Heart right ventricle (tissue), 16 donors: ENCODE measurements at regions of chr11 and their contacts with region 1.

Region 1: GRCh38 chr11:63768237-63769043 is at the start of gene ZFTA:
- DNase-seq: peak; percentile 74 to 75
- ATAC-seq: peak; percentile 7 to 51 (median 26)
- H3K4me3 ChIP-seq: peak within 1 kb of the TSS; percentile 70 to 89 (median 84)
- H3K27ac ChIP-seq: peak within 1 kb of the TSS; percentile 60 to 94 (median 86)
- H3K4me1 ChIP-seq: peaks cover 7 to 40% (median 25%) of the 10 kb centered on the region in 9 donors
- H3K27me3 ChIP-seq: peaks cover 0 to 23% (median 0%) of the 10 kb centered on the region in 7 donors
- CTCF ChIP-seq: peak; percentile 26 to 96 (median 65)
- total RNA-seq, gene ZFTA: 6.8 to 14.3 (median 8.9) TPM

Region 2: DNA sequence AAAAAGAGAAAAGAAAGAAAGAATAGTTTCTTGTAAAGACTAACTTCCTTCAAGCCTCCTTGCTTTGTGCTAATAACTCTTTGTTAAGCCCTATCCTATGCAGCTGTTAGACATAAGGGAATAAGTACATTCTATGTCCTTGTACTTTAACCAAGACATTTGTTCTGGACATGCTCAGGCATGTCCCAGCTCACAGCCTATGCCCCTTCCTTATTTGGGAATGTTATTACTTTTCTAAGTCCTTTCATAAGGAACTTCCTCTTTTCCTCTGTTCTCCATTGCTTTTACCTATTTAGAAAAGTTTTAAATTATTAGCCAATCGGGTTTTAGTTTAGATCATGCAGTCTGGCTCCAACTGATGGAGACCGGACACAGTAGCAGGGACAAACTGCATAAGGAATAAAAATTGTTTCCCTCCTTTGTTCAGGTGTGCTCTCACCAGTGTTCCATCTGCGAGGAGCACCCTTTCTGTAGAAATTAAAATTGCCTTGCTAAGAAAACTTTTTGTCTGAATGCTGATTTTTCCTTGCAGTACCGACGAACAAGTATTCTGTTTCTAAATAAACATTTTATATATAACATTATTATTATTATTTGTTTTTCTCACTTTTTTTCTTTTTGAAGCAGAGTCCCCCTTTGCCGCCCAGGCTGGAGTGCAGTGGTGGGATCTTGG is 23.2 kb after region 1 on chr11:
- intact Hi-C with region 1: no loop called
- DNase-seq: no peak
- ATAC-seq: no peak
- H3K4me3 ChIP-seq: no peak overlapping the region
- H3K27ac ChIP-seq: no peak overlapping the region
- H3K4me1 ChIP-seq: no peaks in the 10 kb centered on the region
- H3K27me3 ChIP-seq: no peaks in the 10 kb centered on the region
- CTCF ChIP-seq: no peak

Region 3: DNA sequence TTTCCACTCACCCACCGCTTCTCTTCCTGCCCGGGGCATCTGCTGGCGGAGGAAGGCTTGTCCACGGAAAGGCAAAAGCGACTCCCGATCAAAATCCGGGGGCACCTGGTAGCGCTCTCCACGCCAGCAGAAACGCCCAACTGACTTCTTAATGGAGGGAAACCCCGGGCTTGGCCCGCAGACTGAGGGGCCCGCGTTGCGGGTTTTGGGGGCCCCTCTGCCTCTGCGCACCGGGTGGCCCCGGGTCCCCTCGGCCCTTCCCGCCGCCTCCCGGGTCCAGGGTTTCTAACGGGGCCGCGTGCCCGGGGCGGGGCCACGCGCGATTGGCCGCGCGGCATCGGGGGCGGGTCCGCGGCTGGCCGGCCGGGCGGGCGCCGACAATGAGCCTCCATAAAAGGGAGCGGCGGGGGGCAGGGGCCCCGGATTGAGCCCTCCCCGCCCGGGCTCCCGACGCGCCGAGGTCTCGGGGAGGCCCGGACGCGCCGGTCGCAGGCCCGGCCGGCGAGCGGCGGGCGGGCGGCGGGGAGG is 44.7 kb after region 1 on chr11 and contains the start of gene SPINDOC:
- intact Hi-C with region 1: loop called in 6 of 10 experiments (anchors 2 to 10 kb)
- DNase-seq: peak; percentile 81 to 83
- ATAC-seq: peak; percentile 87 to 95 (median 93)
- H3K4me3 ChIP-seq: peak within 1 kb of the TSS; percentile 76 to 100 (median 96)
- H3K27ac ChIP-seq: peak within 1 kb of the TSS; percentile 35 to 93 (median 82)
- H3K4me1 ChIP-seq: peaks cover 0 to 38% (median 22%) of the 10 kb centered on the region in 9 donors
- H3K27me3 ChIP-seq: no peaks in the 10 kb centered on the region
- CTCF ChIP-seq: no peak
- total RNA-seq, gene SPINDOC: 7.0 to 13.2 (median 9.9) TPM

Region 4: DNA sequence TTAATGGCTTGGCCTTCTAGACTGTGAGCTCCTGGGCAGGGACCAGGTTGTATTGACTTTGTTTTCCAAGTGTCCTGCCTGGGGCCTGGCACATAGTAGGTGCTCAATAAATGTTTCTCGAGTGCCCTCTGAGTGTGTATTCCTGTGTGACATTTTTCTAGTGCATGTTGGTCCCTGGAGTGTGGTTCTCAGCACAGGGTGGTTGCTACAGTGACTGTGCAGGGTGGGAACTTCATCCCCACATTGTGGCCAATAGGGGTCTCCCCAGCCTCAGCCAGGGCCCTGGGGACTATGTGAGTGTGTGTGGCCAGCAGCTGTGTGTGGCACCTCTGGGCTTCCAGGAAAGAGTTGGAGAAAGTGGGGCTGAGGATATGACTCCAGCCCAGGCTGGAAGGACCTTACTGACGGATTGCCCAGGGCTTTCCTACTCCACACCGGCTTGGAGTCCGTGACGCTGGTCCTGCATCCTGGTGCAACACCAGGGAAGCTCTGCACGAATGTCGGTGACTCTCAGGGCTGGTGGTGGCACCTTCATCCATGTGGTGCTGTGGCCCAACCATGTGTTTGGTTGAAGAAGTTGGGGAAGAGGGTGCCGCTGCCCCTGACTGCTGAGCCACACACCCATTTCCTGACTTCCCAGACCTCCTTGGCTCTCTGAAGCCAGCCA is 61.5 kb after region 1 on chr11:
- intact Hi-C with region 1: no loop called
- DNase-seq: no peak
- ATAC-seq: peak in 5 of 8 donors; percentile 27 to 52 (median 46)
- H3K4me3 ChIP-seq: no peak overlapping the region
- H3K27ac ChIP-seq: no peak overlapping the region
- H3K4me1 ChIP-seq: no peaks in the 10 kb centered on the region
- H3K27me3 ChIP-seq: no peaks in the 10 kb centered on the region
- CTCF ChIP-seq: peak in 6 of 9 donors; percentile 8 to 32 (median 20)

Region 5: GRCh38 chr11:63945477-63946163 is 177.2 kb after region 1 on chr11:
- intact Hi-C with region 1: loop called in 8 of 10 experiments (anchors 2 to 10 kb)
- DNase-seq: peak; percentile 46 to 77
- ATAC-seq: peak; percentile 79 to 94 (median 85)
- H3K4me3 ChIP-seq: peak overlapping the region in 7 of 10 donors; percentile 13 to 41 (median 30)
- H3K27ac ChIP-seq: peak overlapping the region; percentile 20 to 79 (median 72)
- H3K4me1 ChIP-seq: peaks cover 8 to 44% (median 21%) of the 10 kb centered on the region in 9 donors
- H3K27me3 ChIP-seq: no peaks in the 10 kb centered on the region
- CTCF ChIP-seq: peak; percentile 58 to 88 (median 80)